ENCODE measurements at regions of chr2 and their contacts with region 1.

Region 1: GRCh38 chr2:53970724-53971602 is at the start of gene PSME4:
- DNase-seq: peak; percentile 87
- ATAC-seq: peak; percentile 95
- H3K4me3 ChIP-seq: peak within 1 kb of the TSS; percentile 70 to 98 (median 97)
- H3K27ac ChIP-seq: peak within 1 kb of the TSS; percentile 94
- H3K4me1 ChIP-seq: peaks cover 39% of the 10 kb centered on the region
- H3K27me3 ChIP-seq: no peaks in the 10 kb centered on the region; a peak in 1 of 5 replicates
- CTCF ChIP-seq: 0 out of 2 replicates have a peak, but pooled peaks have one; percentile 14
- EP300 ChIP-seq: peak in 1 of 2 experiments; percentile 33; a peak in 1 of 4 replicates
- POLR2A ChIP-seq: peak; percentile 68 to 96
- RAD21 ChIP-seq: peak; percentile 71; the same call in 1 of the 2 replicates
- total RNA-seq, gene PSME4: 77.8 and 171 TPM in 2 replicates

Region 2: GRCh38 chr2:53826587-53827397 is 144.2 kb before region 1 on chr2:
- CTCF ChIA-PET with region 1: no interaction called
- POLR2A ChIA-PET with region 1: interaction called, 10 read pairs
- in situ Hi-C with region 1: no loop called
- intact Hi-C with region 1: loop called (anchors 1 kb)
- DNase-seq: peak; percentile 100
- ATAC-seq: peak; percentile 95
- H3K4me3 ChIP-seq: peak overlapping the region in 2 of 3 experiments; percentile 20 to 44; a peak in 3 of 6 replicates
- H3K27ac ChIP-seq: peak overlapping the region; percentile 93
- H3K4me1 ChIP-seq: peaks cover 53% of the 10 kb centered on the region
- H3K27me3 ChIP-seq: no peaks in the 10 kb centered on the region
- CTCF ChIP-seq: no peak
- EP300 ChIP-seq: peak; percentile 97 to 99
- POLR2A ChIP-seq: peak; percentile 23 to 52; a peak in 3 of 4 replicates
- RAD21 ChIP-seq: no peak; the same call in 1 of the 2 replicates

Region 3: DNA sequence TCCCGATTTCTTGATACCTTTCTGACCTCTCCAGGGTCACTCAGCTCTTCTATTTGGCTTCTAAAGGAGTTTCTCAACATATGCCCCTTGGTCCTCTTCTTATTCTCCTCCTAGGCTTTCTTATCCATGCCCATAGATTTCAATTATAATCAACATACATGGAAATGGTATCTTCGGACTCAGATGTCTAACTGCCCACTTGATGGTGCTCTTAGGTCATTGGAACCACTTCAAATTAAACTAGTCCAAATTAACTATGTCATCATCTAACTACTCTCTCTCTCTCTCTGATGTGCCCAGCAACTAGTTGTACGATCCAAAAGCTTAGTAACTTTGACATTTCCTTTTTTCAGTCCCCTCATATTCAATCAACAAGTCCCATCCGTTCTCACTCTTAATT is 68.0 kb before region 1 on chr2:
- CTCF ChIA-PET with region 1: no interaction called
- POLR2A ChIA-PET with region 1: no interaction called
- in situ Hi-C with region 1: no loop called
- intact Hi-C with region 1: no loop called
- DNase-seq: no peak
- ATAC-seq: no peak
- H3K4me3 ChIP-seq: no peak overlapping the region
- H3K27ac ChIP-seq: no peak overlapping the region
- H3K4me1 ChIP-seq: no peaks in the 10 kb centered on the region
- H3K27me3 ChIP-seq: no peaks in the 10 kb centered on the region
- CTCF ChIP-seq: no peak
- EP300 ChIP-seq: no peak
- POLR2A ChIP-seq: no peak
- RAD21 ChIP-seq: no peak

Region 4: GRCh38 chr2:53987336-53987921 is 16.5 kb after region 1 on chr2:
- CTCF ChIA-PET with region 1: no interaction called
- POLR2A ChIA-PET with region 1: interaction called, 10 read pairs
- in situ Hi-C with region 1: no loop called
- intact Hi-C with region 1: loop called (anchors 2 kb)
- DNase-seq: peak; percentile 51
- ATAC-seq: no peak
- H3K4me3 ChIP-seq: no peak overlapping the region
- H3K27ac ChIP-seq: peak overlapping the region; percentile 1
- H3K4me1 ChIP-seq: peaks cover 46% of the 10 kb centered on the region
- H3K27me3 ChIP-seq: no peaks in the 10 kb centered on the region
- CTCF ChIP-seq: no peak
- EP300 ChIP-seq: peak in 1 of 2 experiments; percentile 26; a peak in 1 of 4 replicates
- POLR2A ChIP-seq: no peak
- RAD21 ChIP-seq: no peak

Region 5: DNA sequence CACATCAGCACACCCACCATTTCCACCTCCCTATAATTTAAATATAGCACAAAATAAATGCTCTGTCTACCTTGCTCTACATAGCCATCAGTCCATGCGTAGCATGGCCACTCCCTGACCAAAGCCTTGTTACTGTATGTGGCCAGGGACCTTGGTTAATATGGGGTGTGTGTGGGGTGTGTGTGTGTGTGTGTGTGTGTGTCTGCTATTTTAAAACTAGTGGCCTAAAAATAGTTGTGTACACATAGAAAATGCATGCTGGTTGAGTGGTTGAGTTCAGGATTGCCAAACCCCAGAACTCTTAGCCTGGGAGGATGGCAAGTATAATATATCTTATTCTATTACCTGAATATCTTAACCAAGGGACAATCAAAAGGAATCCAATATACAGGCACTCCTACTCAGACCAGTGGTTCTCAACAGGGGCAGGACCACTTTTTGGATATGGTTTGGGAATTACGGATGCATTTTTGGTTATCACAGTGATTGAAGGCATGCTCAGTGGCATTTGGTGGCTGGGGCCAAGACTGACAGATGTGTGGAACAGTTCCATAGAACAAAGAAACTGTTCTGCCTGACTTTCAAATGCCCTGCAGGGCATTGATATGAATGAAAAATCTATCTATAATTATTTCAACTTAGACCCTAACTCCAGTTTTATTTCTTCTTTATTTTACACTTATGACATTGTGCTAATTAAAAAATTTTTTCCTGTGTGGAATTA is 72.1 kb after region 1 on chr2:
- CTCF ChIA-PET with region 1: no interaction called
- POLR2A ChIA-PET with region 1: interaction called, 24 read pairs
- in situ Hi-C with region 1: no loop called
- intact Hi-C with region 1: loop called (anchors 1 kb)
- DNase-seq: no peak
- ATAC-seq: no peak
- H3K4me3 ChIP-seq: no peak overlapping the region
- H3K27ac ChIP-seq: peak overlapping the region; percentile 85
- H3K4me1 ChIP-seq: peaks cover 34% of the 10 kb centered on the region
- H3K27me3 ChIP-seq: no peaks in the 10 kb centered on the region
- CTCF ChIP-seq: no peak
- EP300 ChIP-seq: no peak
- POLR2A ChIP-seq: no peak
- RAD21 ChIP-seq: no peak

Region 6: DNA sequence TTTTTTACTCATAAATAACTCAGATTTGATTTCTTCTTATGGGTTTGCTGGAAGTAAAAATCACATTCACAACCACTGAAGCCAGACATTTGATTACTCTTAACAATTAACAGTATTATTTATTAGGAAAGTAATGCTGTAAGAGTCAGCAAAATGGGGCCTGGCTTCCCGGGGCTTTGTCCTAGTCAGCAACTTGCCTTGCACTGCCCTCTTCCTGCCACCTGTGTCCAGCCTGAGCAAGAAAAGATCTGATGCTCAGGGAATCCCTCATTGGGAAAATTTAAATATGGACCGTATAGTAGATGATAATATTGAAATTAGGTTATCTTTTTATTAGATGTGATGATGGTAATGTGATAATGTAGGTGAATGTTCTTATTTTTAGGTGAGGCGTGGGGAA is 113.6 kb after region 1 on chr2:
- CTCF ChIA-PET with region 1: no interaction called
- POLR2A ChIA-PET with region 1: interaction called, 3 read pairs
- in situ Hi-C with region 1: no loop called
- intact Hi-C with region 1: loop called (anchors 1 kb)
- DNase-seq: no peak
- ATAC-seq: peak; percentile 77
- H3K4me3 ChIP-seq: no peak overlapping the region
- H3K27ac ChIP-seq: no peak overlapping the region
- H3K4me1 ChIP-seq: peaks cover 18% of the 10 kb centered on the region
- H3K27me3 ChIP-seq: no peaks in the 10 kb centered on the region
- CTCF ChIP-seq: peak; percentile 55
- EP300 ChIP-seq: no peak
- POLR2A ChIP-seq: no peak
- RAD21 ChIP-seq: no peak; the same call in 1 of the 2 replicates

Region 7: GRCh38 chr2:54106631-54107454 is 135.9 kb after region 1 on chr2:
- CTCF ChIA-PET with region 1: no interaction called
- POLR2A ChIA-PET with region 1: no interaction called
- in situ Hi-C with region 1: no loop called
- intact Hi-C with region 1: loop called (anchors 1 kb)
- DNase-seq: peak; percentile 73
- ATAC-seq: peak; percentile 85
- H3K4me3 ChIP-seq: peak overlapping the region in 1 of 3 experiments; percentile 32; a peak in 2 of 6 replicates
- H3K27ac ChIP-seq: no peak overlapping the region
- H3K4me1 ChIP-seq: peaks cover 32% of the 10 kb centered on the region
- H3K27me3 ChIP-seq: no peaks in the 10 kb centered on the region
- CTCF ChIP-seq: peak; percentile 85
- EP300 ChIP-seq: no peak
- POLR2A ChIP-seq: no peak
- RAD21 ChIP-seq: peak; percentile 78

Measured in HepG2 (cell line).